Calu3 (cell line): ENCODE measurements at regions of chr2 and their contacts with region 1.

Region 1: GRCh38 chr2:6986301-6987176 is 69.3 kb downstream of the RNF144A start:
- DNase-seq: peak; percentile 20
- H3K4me3 Mint-ChIP-seq: no peak overlapping the region
- H3K27ac Mint-ChIP-seq: no peak overlapping the region
- H3K4me1 Mint-ChIP-seq: peaks cover 32% of the 10 kb centered on the region
- H3K27me3 Mint-ChIP-seq: no peaks in the 10 kb centered on the region
- CTCF ChIP-seq: no peak

Region 2: DNA sequence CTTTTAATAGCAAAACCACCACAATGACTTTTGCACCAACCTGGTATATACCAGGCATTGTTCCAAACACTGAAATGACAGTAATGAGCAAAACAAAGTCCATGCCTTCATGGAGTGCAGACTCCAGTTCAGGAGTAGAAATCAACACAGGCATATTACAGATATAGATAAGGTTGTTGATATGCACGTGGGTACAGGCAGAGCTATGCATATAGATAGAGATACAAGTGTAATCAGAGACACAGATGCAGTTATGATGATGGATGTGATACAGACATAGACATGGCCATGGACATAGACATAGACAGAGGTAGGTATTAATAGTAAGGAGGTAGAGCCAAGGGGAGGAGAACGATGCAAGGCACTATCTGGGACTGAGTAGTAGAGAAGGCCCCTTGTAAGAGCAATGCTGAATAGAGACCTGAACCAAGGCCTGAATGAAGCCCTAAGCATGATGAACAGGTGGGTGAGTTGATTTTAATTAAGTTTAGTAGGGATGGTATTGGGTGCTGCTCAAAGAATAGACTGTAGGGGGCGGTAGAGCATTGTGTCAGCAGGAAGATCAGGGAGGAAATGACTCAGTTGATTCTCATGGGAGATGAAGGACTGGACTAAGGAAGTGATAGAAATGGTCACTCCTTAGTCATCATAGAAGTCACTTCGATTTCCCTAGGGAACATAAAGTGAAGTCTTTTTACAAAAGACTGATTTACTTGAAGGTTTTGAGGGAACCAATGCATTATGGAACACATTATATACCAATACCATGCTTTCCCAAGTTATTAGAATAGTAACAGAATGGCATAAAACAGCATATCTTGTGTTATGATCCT is 160.2 kb before region 1 on chr2:
- CTCF ChIA-PET with region 1: no interaction called
- intact Hi-C with region 1: no loop called
- DNase-seq: peak; percentile 66
- H3K4me3 Mint-ChIP-seq: no peak overlapping the region
- H3K27ac Mint-ChIP-seq: no peak overlapping the region
- H3K4me1 Mint-ChIP-seq: peaks cover 11% of the 10 kb centered on the region
- H3K27me3 Mint-ChIP-seq: peaks cover 25% of the 10 kb centered on the region
- CTCF ChIP-seq: peak; percentile 63

Region 3: DNA sequence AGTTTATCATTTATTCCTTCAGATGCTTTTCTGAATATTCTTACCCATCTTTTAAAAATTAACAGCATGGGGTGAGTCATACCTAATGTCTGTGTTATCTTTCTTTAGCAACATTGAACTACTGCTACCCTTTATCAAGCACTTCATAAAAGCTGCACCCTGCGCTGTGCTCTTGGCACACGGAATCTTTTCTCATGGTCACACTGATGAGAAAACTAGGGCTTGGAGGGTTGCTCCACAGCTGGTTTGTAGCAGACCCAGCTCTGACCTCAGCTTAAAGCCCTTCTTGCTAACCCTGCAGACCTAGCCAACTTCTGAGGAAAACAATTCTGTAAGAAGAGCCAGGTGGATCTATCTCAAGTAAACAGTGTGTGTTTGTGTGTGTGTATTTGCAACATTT is 37.0 kb after region 1 on chr2:
- CTCF ChIA-PET with region 1: no interaction called
- intact Hi-C with region 1: loop called (anchors 5 kb)
- DNase-seq: no peak
- H3K4me3 Mint-ChIP-seq: no peak overlapping the region
- H3K27ac Mint-ChIP-seq: no peak overlapping the region
- H3K4me1 Mint-ChIP-seq: peaks cover 28% of the 10 kb centered on the region
- H3K27me3 Mint-ChIP-seq: no peaks in the 10 kb centered on the region
- CTCF ChIP-seq: no peak